Cardiac septum (tissue), 1 donor: ENCODE measurements at regions of chr7 and their contacts with region 1.

Region 1: DNA sequence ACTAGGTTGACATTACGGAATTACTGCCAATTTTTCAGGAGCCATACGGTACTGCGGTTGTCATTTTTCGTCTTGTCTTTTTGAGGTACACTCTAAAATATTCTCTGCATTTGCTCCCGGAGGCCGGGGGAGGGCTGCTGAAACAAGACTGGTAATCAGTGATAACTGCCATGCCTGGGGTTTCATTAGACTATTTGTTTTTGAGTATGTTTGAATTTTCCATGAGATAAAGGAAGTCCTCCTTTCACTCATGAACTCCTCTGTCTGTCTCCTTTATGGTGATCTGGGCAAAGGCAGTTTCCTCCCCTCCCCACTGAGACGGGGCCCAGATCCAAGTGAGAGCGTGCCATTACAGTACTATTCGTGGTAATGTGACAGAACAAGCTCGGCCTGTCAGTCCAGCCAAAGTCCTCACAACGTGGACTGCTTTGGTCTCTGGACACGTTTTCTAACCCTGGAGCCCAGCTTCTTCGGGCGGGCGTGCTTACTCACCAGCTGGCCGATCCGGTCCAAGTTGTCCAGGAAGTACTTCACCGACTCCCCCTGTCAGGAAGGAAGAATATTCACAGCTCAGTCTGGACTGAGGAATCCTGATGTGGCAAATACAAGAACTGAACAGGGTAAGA is 45.1 kb downstream of the AMZ1 start:
- DNase-seq: peak; percentile 86

Region 2: DNA sequence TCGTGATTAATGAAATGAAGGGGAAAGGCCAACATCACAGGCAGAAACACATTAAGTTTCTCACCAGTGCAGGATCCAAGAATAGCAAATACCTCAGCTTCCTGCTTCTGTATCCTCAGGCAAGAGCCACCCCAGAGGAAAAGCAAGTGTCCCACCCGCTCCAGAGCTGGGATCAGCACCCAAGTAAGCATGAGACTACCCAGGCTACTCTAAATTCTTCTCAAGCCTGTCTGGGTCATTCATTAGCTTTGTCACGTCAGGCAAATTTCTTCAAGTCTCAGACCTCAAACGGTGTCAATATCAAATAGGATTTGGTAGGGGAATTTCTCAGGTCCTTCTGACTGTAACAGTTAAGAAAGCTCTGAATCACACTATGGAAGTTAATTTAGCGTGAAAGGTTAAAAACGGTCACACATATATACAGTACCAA is 52.0 kb after region 1 on chr7:
- intact Hi-C with region 1: no loop called
- DNase-seq: no peak

Region 3: GRCh38 chr7:2796358-2797352 is 63.6 kb after region 1 on chr7:
- intact Hi-C with region 1: loop called (anchors 5 kb)
- DNase-seq: no peak

Region 4: DNA sequence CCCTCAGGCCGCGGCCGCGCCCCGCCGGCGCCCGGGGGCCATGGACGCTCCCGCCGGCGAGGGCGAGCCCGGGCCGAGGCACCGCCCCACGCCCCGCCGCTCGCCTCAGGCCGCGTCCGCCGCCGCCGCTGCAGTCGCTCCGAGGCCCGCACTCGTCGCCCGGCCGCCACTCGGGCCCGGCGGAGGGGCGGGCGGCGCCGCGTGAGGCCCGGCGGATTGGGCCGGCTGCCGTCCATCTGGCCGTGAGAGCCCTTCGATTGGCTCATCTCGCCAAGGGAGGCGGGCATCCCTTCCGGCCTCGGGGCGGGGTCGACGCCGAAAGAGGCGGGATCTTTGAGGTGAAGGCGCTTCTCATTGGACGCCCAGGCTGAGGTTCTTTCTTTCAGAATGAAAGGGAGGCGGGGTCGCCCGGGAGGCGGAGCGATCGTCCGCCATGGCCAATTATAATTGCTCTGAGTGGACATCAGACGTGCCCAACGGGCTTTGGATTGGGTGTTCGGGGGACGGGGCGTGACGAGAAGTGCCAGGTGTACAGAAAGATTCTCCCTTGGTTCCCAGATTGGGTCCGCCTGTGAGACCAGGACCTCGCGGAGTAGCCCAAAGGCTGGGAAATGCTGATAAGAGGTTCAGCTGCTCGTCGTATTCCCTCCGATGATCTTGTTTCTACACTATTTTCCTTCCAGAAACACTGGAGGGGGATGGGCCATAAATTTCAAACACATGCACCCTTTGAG is 111.3 kb after region 1 on chr7 and contains the start of gene GNA12:
- intact Hi-C with region 1: no loop called
- DNase-seq: peak; percentile 99
- total RNA-seq, gene GNA12: 33.7 TPM